GM10248 (cell line): ENCODE measurements at regions of chr7 and their contacts with region 1.

Region 1: DNA sequence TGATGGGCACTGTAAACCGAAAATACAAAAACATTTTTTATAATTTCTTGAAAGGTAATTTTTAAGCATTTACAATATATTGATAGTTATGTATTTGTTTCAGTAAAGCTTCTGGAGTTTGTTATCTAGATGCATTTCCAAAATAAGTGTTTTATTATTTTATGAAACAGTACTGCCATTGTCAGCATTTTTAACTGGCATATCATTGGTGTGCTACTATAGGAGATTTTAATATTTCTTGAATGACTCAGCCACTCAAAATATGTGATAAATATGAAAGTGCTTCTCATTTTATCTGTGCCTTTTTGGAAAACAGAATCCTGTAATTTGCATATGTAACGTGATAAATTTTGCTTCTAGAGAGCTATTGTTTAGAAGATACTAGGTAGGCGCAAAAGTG is 97.9 kb downstream of the ANKIB1 start:
- DNase-seq: no peak
- CTCF ChIP-seq: no peak

Region 2: DNA sequence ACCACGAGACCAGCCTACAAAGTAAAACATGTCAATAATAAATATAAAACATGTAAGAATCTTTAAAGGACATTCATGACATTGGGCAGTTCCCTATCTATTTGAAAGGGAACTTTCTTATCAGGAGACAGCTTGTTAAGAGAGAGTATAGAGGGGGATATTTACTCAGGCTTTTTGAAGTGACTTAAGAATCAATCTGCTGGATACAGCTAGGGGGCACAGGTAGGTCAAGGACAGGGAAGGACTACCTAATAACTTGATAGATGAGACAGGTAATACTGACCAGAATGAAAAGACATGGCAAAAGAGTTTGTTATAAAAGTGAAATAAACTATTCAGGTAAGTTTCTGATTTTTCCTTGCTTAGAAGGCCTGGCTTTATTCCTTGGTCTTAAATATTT is 142.9 kb before region 1 on chr7:
- CTCF ChIA-PET with region 1: no interaction called
- POLR2A ChIA-PET with region 1: no interaction called
- DNase-seq: no peak
- CTCF ChIP-seq: no peak

Region 3: DNA sequence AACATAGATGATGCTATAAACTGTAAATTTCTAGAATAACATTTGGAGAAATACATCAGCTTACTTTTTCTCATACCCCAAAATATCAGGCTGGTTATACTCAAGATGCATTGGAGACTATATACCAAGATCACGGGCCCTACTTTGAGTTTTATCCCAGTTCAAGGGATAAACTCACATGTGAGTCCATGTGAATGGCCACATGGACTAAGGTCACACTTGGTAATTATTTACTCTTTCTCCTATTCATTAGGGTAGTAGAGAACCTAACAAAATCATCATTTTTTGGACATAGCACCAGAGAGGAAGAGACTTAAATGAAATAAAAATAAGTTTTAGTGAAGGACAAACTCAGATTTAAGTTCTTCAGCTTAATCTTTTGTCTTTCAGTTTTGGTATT is 10.5 kb after region 1 on chr7:
- CTCF ChIA-PET with region 1: interaction called, 11 read pairs
- POLR2A ChIA-PET with region 1: no interaction called
- DNase-seq: no peak
- CTCF ChIP-seq: no peak